ENCODE measurements at regions of chr3 and their contacts with region 1.

Region 1: DNA sequence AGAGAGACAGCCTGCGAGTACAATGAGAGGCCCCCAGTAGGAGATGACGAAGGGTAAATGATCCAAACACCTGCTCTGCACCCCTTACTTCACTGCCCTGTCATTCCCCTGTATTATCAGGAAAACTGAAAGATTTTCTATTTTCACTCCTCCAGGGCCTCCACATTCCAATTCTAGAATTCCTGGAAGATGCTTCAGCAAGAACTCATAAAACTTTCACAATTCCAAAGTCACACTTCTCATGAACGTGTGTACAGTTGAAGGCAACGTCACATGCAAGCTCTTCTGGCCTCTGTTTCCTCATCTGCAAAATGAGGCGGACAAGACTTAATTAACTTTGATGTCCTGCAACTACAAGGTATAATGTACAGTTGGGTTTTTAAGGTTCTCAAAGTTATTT is 62.8 kb upstream of the SPATA12 start:
- DNase-seq: peak in 1 of 2 experiments; percentile 23
- H3K4me3 ChIP-seq: no peak overlapping the region
- H3K4me3 Mint-ChIP-seq: no peak overlapping the region
- H3K27ac Mint-ChIP-seq: peak overlapping the region; percentile 82
- H3K4me1 ChIP-seq: peaks cover 14% of the 10 kb centered on the region
- H3K4me1 Mint-ChIP-seq: peaks cover 34% of the 10 kb centered on the region
- H3K27me3 ChIP-seq: no peaks in the 10 kb centered on the region
- H3K27me3 Mint-ChIP-seq: no peaks in the 10 kb centered on the region
- CTCF ChIP-seq: no peak

Region 2: DNA sequence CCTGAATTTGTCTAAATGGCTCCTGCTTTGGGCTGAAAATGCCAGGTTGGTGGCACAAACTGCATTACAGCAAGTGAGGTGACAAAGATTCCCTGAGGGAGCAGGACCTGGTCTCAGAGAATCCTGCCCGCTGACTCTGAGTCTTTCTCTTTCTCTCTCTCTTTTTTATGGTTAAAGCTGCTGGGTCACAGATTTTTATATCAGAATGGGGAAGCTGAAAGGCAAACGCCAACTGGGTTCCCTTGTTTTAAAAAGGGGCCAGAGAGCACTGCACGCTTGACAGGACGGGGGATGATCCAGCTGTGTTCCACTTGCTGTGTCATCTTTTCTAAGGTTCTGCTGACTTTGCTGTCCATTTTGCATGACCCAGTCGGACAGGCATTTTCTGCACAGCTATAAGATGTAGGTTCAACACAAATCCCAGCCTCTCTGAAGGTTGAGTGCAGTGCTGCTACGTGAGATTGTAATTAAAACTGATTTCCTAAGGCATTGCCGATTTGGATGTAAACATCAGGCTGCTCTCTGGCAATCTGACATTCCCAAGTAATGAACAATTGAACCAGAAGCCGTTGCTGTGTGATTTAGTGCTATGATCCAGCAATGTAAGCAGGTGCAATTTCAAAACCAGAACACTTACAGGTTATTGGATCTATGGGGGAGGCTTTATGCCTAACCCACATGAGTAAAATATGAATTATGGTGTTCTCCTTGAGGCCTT is 221.7 kb before region 1 on chr3:
- CTCF ChIA-PET with region 1: no interaction called
- POLR2A ChIA-PET with region 1: no interaction called
- intact Hi-C with region 1: no loop called
- DNase-seq: no peak
- H3K4me3 ChIP-seq: no peak overlapping the region
- H3K4me3 Mint-ChIP-seq: no peak overlapping the region
- H3K27ac Mint-ChIP-seq: no peak overlapping the region
- H3K4me1 ChIP-seq: no peaks in the 10 kb centered on the region; the same call in 1 of the 2 replicates
- H3K4me1 Mint-ChIP-seq: peaks cover 5% of the 10 kb centered on the region
- H3K27me3 ChIP-seq: no peaks in the 10 kb centered on the region
- H3K27me3 Mint-ChIP-seq: no peaks in the 10 kb centered on the region
- CTCF ChIP-seq: no peak

Region 3: DNA sequence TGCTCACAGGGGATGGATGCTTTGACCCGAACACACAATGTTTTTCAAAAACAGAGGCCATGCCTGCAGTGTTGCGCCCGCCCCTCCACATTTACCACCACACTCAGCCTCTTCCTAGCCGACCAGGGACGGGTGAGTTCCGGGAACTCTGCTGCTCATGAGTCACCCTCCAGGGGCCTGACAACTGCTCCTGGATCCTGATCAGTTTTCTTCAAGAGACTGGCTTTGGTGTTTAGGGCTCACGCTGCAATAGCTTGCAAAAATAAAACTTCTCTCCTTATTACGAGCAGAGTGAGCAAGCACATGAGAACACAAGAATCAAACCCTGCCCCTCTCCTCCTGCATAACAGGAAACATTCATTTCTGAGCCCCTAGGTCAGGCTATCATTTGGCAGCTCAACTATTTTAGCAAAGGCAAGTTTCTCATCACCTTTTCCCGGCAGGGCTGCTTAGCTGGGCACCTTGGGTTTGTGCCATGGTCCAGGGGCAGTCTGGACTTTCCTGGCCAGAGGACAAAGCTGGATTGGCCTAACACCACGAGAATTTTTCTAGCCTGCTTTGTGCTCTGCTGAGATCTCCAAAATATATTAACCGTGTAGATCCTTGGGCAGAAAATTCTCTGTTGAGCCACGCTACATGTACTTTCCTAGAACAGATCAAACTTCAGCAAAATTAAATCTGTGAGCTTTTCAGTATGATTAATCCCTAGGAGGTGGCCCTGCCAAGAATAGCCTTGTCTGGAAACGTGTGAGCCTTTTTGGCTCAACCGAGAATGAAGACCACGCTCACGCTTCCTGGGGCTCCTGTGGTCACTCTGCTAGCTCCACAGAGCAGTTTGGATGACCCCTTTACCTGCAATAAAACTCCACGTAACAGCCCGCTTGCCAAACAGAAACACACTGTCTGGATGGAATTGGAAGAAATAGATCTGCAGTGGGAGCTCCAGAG is 10.1 kb after region 1 on chr3:
- CTCF ChIA-PET with region 1: no interaction called
- POLR2A ChIA-PET with region 1: no interaction called
- intact Hi-C with region 1: no loop called
- DNase-seq: no peak
- H3K4me3 ChIP-seq: no peak overlapping the region
- H3K4me3 Mint-ChIP-seq: no peak overlapping the region
- H3K27ac Mint-ChIP-seq: peak overlapping the region; percentile 86
- H3K4me1 ChIP-seq: peaks cover 4% of the 10 kb centered on the region; the same call in 1 of the 2 replicates
- H3K4me1 Mint-ChIP-seq: peaks cover 6% of the 10 kb centered on the region
- H3K27me3 ChIP-seq: no peaks in the 10 kb centered on the region
- H3K27me3 Mint-ChIP-seq: no peaks in the 10 kb centered on the region
- CTCF ChIP-seq: no peak

Region 4: GRCh38 chr3:57060089-57060829 is 62.6 kb after region 1 on chr3 and contains the start of gene SPATA12:
- CTCF ChIA-PET with region 1: no interaction called
- POLR2A ChIA-PET with region 1: interaction called, 4 read pairs
- intact Hi-C with region 1: loop called (anchors 5 kb)
- DNase-seq: peak; percentile 81 to 86
- H3K4me3 ChIP-seq: no peak within 1 kb of the TSS
- H3K4me3 Mint-ChIP-seq: peak within 1 kb of the TSS; percentile 52
- H3K27ac Mint-ChIP-seq: peak within 1 kb of the TSS; percentile 87
- H3K4me1 ChIP-seq: peaks cover 13% of the 10 kb centered on the region; the same call in 1 of the 2 replicates
- H3K4me1 Mint-ChIP-seq: peaks cover 27% of the 10 kb centered on the region
- H3K27me3 ChIP-seq: no peaks in the 10 kb centered on the region
- H3K27me3 Mint-ChIP-seq: no peaks in the 10 kb centered on the region
- CTCF ChIP-seq: no peak
- total RNA-seq, gene SPATA12: 0.16 TPM in 1 of 2 replicates, not detected in the other

Region 5: DNA sequence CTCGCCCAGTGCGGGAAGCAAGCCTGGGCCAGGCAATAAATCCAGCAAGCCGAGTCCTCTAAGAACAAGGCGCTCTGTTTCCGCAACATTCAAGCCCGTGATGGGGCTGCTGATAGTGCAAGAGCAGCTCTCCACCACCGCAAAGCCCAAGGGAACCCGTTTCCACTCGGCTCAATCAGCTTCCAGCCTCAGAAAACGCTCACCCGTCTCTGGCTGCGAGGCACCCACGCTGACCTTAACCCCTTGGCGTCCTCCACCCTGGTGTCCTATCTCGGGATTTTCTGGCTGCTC is 80.6 kb after region 1 on chr3:
- CTCF ChIA-PET with region 1: interaction called, 4 read pairs
- POLR2A ChIA-PET with region 1: no interaction called
- intact Hi-C with region 1: loop called (anchors 1 kb)
- DNase-seq: peak in 1 of 2 experiments; percentile 66
- H3K4me3 ChIP-seq: peak overlapping the region; percentile 63
- H3K4me3 Mint-ChIP-seq: peak overlapping the region; percentile 83
- H3K27ac Mint-ChIP-seq: no peak overlapping the region
- H3K4me1 ChIP-seq: peaks cover 7% of the 10 kb centered on the region; the same call in 1 of the 2 replicates
- H3K4me1 Mint-ChIP-seq: peaks cover 13% of the 10 kb centered on the region
- H3K27me3 ChIP-seq: no peaks in the 10 kb centered on the region
- H3K27me3 Mint-ChIP-seq: no peaks in the 10 kb centered on the region
- CTCF ChIP-seq: no peak

Region 6: GRCh38 chr3:57227204-57227929 is 229.7 kb after region 1 on chr3 and contains the start of gene APPL1:
- CTCF ChIA-PET with region 1: no interaction called
- POLR2A ChIA-PET with region 1: no interaction called
- intact Hi-C with region 1: loop called (anchors 10 kb)
- DNase-seq: peak; percentile 93 to 98
- H3K4me3 ChIP-seq: peak within 1 kb of the TSS; percentile 90
- H3K4me3 Mint-ChIP-seq: peak within 1 kb of the TSS; percentile 83
- H3K27ac Mint-ChIP-seq: peak within 1 kb of the TSS; percentile 80
- H3K4me1 ChIP-seq: peaks cover 13% of the 10 kb centered on the region; the same call in 1 of the 2 replicates
- H3K4me1 Mint-ChIP-seq: peaks cover 12% of the 10 kb centered on the region
- H3K27me3 ChIP-seq: no peaks in the 10 kb centered on the region
- H3K27me3 Mint-ChIP-seq: no peaks in the 10 kb centered on the region
- CTCF ChIP-seq: no peak
- total RNA-seq, gene APPL1: 40.0 and 40.7 TPM in 2 replicates

Measured in Caco-2 (cell line).